Right ventricle myocardium superior (tissue), 1 donor: ENCODE measurements at regions of chr11 and their contacts with region 1.

Region 1: DNA sequence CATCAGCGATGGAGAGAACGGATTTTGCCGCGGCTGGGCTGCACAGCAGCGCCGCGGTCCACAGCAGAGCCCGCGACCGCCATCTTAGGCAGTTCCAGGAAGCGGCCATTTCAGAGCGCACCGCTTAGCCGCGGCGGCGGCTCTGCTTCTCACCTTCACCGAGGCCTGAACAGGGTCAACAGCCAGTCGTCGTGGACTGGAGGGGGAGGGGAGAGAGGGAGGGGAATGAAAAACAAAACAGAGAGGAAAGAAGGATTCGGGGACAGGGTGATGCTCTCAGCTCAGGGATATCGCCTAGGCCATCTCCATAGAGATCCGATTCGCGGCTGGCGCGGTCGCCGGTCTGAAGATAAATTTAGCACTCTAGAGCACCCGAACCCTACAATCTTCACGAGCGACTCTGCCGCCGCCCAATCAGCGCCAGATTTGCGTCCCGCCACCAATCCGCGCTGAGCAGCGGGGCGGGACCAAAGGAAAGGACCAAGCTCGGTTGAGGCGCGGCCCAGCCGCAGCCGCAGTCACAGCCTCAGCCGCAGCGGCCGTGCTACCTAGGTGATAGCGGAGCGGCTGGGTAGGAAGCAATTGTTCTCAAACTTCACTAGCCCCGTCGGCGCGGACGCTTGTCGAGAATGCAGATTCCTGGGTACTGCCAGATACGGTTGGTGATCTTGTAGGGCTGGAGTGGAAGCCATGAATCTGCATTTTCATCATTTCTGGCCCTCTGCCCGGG is at the start of gene ZBED5:
- DNase-seq: peak; percentile 99
- ATAC-seq: peak; percentile 97
- total RNA-seq, gene ZBED5: 37.4 TPM

Region 2: DNA sequence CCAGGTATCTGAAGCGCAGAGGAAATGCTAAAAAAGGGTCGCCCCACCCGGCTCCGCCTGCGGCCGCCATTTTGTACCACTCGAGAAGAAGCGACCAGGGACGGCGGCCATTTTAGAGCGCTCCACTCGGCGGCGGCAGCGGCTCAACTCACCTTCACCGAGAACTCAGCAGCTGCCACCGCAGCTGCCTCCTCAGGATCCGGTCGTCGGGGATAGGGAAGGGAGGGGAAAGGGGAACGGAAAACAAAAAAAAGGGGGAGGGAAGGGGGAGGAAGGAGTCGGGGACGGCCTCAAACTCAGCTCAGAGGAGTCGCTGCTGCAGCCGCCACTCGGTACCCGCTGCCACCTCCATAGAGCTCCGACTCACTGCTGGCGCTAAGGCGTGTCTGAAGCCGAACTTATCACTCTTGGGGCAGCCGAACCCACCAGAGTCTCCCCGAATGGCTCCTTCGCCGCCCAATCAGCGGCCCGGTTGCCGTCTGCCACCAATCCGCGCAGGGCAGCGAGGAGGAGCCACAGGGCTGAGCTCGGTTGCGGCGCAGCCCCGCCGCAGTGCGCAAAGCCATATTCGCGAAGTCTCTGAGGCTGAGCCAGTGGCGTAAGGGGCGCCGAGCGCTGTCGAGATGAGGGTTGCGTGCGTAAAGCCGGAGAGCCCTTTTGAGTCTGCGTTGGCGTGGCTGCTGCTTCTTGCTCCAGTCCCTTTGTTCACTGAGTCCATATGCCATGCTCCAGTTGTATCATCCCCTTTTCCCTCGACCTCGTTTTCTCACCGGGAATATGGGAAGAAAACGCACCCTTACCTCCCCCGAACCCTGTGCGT is 49.1 kb before region 1 on chr11 and contains the start of gene EIF4G2:
- intact Hi-C with region 1: loop called (anchors 5 kb)
- DNase-seq: peak; percentile 99
- ATAC-seq: peak; percentile 97
- total RNA-seq, gene EIF4G2: 714 TPM

Region 3: DNA sequence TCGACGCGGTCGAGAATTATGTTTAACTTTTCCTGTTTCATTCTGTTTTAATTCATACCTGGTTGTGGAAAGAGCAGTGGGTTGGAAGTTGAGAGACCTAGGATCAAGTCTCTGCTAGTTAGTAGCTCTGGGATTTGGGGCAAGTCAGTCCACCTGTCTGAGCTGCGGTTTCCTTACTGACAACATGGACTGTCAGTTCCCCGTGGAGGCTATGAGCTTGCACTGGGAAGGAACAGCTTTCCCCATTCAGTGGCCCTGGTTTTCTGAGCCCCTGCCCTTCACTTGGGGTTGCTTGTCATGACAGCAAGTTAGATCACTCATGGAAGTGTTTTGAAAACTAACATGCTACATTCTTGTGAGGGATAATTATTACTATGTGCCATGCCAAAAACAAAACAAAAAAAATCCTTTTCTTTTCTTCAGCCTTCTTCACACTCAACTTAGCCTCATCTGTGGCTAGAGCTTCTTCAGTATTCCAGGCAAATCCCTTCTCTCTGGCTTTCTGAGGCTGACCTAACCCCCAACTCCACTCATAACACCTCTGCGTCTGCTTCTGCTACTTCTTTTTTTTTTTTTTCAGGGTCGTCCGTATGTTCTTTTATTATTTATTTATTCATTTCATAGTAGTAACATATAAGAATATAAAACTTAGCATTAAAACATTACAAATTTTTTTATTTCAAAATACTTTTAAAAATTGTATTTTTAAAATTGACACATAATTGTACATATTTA is 43.0 kb after region 1 on chr11:
- intact Hi-C with region 1: loop called (anchors 5 kb)
- DNase-seq: no peak
- ATAC-seq: peak; percentile 4

Region 4: DNA sequence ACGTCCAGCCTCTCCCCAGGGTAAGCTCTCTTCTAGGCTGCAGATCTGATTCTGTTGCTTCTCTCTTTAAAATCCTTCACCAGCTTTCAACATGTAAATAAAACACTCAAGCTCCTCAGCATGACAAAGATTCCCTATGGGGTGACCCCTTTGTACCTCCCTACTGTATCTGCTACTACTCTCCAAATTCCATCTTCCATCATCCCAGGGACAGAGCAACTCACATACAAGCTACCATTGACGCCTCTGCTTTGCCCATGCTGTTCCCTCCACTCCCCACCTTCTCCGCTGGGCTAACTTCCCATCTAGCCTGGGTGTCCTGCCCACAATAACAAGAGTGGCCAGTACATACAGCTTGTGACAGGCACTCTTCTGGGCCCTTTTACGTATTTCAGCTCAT is 207.5 kb after region 1 on chr11:
- intact Hi-C with region 1: no loop called
- DNase-seq: no peak
- ATAC-seq: no peak

Region 5: GRCh38 chr11:11856638-11857037 is 998.8 kb after region 1 on chr11:
- intact Hi-C with region 1: no loop called
- DNase-seq: no peak
- ATAC-seq: peak; percentile 59